Adrenal gland (tissue), 19 donors: ENCODE measurements at regions of chr22 and their contacts with region 1.

Region 1: GRCh38 chr22:36856121-36856791 is 4.5 kb upstream of the NCF4 start:
- DNase-seq: peak; percentile 86 to 95 (median 92)
- H3K4me3 ChIP-seq: no peak overlapping the region
- H3K27ac ChIP-seq: peak overlapping the region in 2 of 5 donors; percentile 32 to 62
- H3K4me1 ChIP-seq: peaks cover 5 to 26% of the 10 kb centered on the region in 2 donors
- H3K27me3 ChIP-seq: no peaks in the 10 kb centered on the region
- CTCF ChIP-seq: peak; percentile 100
- POLR2A ChIP-seq: no peak

Region 2: DNA sequence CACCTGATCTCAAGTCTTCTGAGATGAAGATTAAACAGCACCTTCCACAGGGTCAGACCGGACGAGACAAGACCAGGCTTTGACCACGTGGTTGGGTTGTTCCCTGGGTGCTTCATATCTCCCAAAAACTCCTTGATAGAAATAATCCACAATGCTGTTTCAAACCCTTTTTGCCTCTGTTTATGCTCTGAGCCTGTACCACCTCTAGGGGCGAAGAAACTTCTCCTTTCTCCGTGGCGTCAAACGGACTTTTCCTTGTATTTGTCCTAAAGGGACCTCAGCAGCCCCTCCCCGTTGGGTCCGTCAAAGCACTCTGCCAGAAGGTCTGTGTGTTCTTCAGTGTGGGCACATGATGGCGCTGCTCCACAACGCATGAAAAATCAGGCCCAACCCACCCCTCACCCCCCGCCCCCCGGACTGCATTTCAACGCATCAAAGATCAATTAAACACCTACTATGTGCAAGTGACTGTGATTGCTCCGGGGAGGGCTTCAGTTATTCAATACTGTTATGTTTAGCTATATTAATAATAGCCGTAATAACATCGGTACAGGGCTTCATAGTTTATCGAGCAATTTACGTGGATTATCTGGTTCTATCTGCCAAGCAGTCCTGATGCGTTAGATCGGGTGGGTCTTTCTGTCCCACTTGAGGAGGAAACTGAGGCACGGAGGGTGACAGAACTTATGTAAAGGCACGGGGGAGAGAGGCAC is 310.0 kb before region 1 on chr22:
- intact Hi-C with region 1: loop called (anchors 2 to 10 kb)
- DNase-seq: peak; percentile 31 to 67 (median 48)
- H3K4me3 ChIP-seq: no peak overlapping the region
- H3K27ac ChIP-seq: no peak overlapping the region
- H3K4me1 ChIP-seq: no peaks in the 10 kb centered on the region
- H3K27me3 ChIP-seq: peaks cover 2% of the 10 kb centered on the region
- CTCF ChIP-seq: peak; percentile 12 to 57 (median 42)
- POLR2A ChIP-seq: no peak

Region 3: GRCh38 chr22:36552289-36552688 is 304.0 kb before region 1 on chr22:
- intact Hi-C with region 1: loop called (anchors 2 to 10 kb)
- DNase-seq: no peak
- H3K4me3 ChIP-seq: no peak overlapping the region
- H3K27ac ChIP-seq: no peak overlapping the region
- H3K4me1 ChIP-seq: no peaks in the 10 kb centered on the region
- H3K27me3 ChIP-seq: peaks cover 12% of the 10 kb centered on the region
- CTCF ChIP-seq: no peak
- POLR2A ChIP-seq: no peak

Region 4: GRCh38 chr22:36781656-36782627 is 74.3 kb before region 1 on chr22:
- intact Hi-C with region 1: loop called (anchors 5 kb)
- DNase-seq: peak; percentile 86 to 92 (median 89)
- H3K4me3 ChIP-seq: no peak overlapping the region
- H3K27ac ChIP-seq: peak overlapping the region in 2 of 5 donors; percentile 58 to 80
- H3K4me1 ChIP-seq: peaks cover 0 to 6% of the 10 kb centered on the region in 2 donors
- H3K27me3 ChIP-seq: peaks cover 8% of the 10 kb centered on the region
- CTCF ChIP-seq: peak; percentile 88 to 94 (median 92)
- POLR2A ChIP-seq: no peak

Region 5: GRCh38 chr22:36954211-36954891 is 98.1 kb after region 1 on chr22:
- intact Hi-C with region 1: no loop called
- DNase-seq: peak in 1 of 7 donors; percentile 29
- H3K4me3 ChIP-seq: no peak overlapping the region
- H3K27ac ChIP-seq: no peak overlapping the region
- H3K4me1 ChIP-seq: no peaks in the 10 kb centered on the region
- H3K27me3 ChIP-seq: peaks cover 4% of the 10 kb centered on the region
- CTCF ChIP-seq: no peak
- POLR2A ChIP-seq: no peak